PC-3 (cell line): ENCODE measurements at regions of chrX and their contacts with region 1.

Region 1: GRCh38 chrX:130916636-130917422 is 13.8 kb upstream of the ENOX2 start:
- DNase-seq: peak; percentile 42
- ATAC-seq: peak; percentile 64
- H3K4me3 ChIP-seq: no peak overlapping the region
- H3K27ac ChIP-seq: no peak overlapping the region
- H3K4me1 ChIP-seq: no peaks in the 10 kb centered on the region
- H3K27me3 ChIP-seq: no peaks in the 10 kb centered on the region
- CTCF ChIP-seq: peak; percentile 85

Region 2: DNA sequence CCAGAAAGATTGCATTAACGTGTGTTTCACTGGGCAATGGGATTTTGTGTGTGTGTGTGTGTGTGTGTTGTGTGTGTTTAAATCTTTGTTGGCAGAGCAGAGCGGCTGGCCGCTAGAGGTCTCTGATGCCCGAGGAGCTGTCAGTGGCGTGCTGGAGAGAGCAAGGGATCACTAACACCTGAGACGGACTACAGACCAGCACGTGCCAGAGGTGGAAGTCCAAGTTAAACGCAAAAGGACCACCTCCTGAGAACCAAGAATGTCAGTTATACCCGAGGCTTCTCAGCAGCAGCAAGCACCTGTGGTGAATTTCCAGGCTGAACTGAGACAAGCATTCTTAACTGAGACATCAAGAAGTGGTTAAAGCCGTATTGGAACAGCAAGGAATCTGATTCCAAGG is 586.1 kb before region 1 on chrX:
- CTCF ChIA-PET with region 1: no interaction called
- POLR2A ChIA-PET with region 1: no interaction called
- intact Hi-C with region 1: loop called (anchors 2 kb)
- DNase-seq: peak; percentile 57
- ATAC-seq: peak; percentile 93
- H3K4me3 ChIP-seq: peak overlapping the region; percentile 47; the same call in 1 of the 2 replicates
- H3K27ac ChIP-seq: no peak overlapping the region
- H3K4me1 ChIP-seq: peaks cover 4% of the 10 kb centered on the region; the same call in 1 of the 2 replicates
- H3K27me3 ChIP-seq: no peaks in the 10 kb centered on the region; the same call in 1 of the 2 replicates
- CTCF ChIP-seq: peak; percentile 84

Region 3: DNA sequence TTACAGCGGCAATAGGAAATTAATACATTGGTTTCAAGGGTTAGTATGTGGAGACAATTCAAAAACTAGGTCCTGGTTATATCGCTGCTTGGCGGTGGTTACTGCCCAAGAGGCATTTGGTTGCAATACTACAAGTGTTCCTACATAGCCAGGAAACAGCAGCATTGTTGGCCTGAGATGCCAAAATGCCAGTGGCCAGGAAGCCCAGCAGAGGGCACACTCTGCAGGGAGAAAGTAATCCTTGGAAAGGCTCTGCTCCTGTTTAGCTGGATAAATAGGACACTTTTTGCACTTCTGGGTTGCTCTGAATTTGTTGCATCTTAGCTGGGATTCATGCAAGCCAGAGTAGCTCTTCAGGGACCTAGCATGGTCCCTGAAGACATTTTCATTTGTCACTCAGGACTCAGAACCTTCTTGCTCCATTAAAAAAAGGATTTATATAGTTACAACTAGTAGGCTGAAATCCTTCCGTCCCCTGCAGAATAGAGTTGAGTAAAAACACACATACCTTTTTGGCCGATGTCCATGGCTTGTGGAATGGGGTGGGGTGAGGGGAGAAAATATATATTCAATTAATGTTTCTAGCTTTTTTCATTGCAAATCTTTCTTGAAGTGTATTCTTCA is 523.3 kb before region 1 on chrX:
- CTCF ChIA-PET with region 1: interaction called, 12 read pairs
- POLR2A ChIA-PET with region 1: no interaction called
- intact Hi-C with region 1: loop called (anchors 1 kb)
- DNase-seq: peak; percentile 74
- ATAC-seq: peak; percentile 84
- H3K4me3 ChIP-seq: no peak overlapping the region
- H3K27ac ChIP-seq: no peak overlapping the region
- H3K4me1 ChIP-seq: no peaks in the 10 kb centered on the region
- H3K27me3 ChIP-seq: no peaks in the 10 kb centered on the region
- CTCF ChIP-seq: peak; percentile 75

Region 4: DNA sequence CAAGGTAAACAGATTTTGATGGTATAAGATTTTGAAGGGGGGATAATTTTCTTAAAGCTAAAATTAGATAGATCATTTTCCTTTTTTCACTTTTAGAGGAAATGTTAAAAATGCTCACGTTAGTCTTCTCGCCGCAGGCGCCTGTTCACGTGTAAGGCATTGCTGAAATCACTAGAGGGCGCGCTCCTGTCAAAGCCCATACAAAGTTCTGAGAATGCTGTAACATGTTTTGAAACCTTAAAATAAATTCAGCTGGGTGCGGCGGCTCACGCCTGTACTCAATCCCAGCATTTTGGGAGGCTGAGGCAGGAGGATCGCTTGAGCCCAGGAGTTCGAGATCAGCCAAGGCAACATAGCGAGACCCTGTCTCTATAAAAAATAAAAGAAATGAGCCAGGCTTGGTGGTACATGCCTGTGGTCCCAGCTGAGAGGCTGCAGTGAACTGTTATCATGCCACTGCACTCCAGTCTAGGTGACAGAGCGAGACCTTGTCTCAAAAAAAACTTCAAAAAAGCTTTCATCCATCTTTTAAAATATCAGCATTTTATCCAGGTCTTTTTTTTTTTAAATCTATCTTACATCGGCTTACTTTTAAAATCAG is 377.0 kb before region 1 on chrX:
- CTCF ChIA-PET with region 1: interaction called, 3 read pairs
- POLR2A ChIA-PET with region 1: no interaction called
- intact Hi-C with region 1: loop called (anchors 1 kb)
- DNase-seq: peak; percentile 63
- ATAC-seq: peak; percentile 55
- H3K4me3 ChIP-seq: no peak overlapping the region
- H3K27ac ChIP-seq: no peak overlapping the region
- H3K4me1 ChIP-seq: no peaks in the 10 kb centered on the region
- H3K27me3 ChIP-seq: no peaks in the 10 kb centered on the region
- CTCF ChIP-seq: peak; percentile 78

Region 5: GRCh38 chrX:130575831-130576389 is 340.9 kb before region 1 on chrX:
- CTCF ChIA-PET with region 1: interaction called, 17 read pairs
- POLR2A ChIA-PET with region 1: no interaction called
- intact Hi-C with region 1: loop called (anchors 1 kb)
- DNase-seq: peak; percentile 56
- ATAC-seq: peak; percentile 66
- H3K4me3 ChIP-seq: no peak overlapping the region
- H3K27ac ChIP-seq: no peak overlapping the region
- H3K4me1 ChIP-seq: peaks cover 12% of the 10 kb centered on the region
- H3K27me3 ChIP-seq: no peaks in the 10 kb centered on the region
- CTCF ChIP-seq: peak; percentile 82

Region 6: DNA sequence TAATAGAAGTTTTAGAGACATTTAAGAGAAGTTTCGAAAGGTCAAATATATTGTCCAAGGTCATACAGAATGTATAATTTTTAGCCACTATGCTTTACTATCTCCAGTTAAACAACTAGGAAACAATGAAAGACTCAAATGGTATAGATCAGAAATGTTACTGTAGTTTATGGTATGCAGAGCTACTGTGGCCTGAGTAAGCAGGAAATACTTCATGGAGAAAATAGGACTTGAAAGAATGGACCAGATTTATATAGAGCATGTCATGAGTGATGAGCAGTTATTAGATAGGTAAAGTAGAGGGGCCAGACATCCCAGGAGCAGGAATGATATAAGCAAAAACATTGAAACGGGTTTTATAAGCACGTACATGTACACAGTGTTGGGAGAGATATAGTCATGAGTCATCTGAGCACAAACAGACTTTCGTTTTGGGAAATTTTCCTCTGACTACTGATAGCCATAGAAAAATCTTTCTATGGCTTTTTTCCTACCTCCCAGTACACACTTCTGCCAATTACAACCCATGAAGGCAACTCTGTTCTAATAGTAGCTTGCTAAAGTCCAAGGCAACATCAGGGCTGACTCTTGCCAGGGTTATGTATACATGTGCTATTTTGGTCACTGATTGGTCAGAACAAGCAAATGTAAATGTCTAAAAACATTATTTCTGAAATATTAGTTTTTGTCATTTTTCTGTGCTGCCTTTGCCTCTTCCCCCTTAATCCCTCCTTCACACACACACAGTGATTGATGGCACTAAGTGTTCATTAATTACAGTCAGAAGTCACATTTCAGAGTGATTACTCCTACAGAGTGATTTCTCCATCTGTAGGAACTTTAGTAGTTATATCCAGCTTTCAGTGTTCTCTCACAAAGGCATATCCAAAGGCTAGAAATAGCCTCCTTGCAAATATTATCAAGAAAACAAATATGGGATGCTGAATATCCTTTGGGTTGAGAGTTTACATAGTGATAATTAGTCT is 212.5 kb before region 1 on chrX:
- CTCF ChIA-PET with region 1: no interaction called
- POLR2A ChIA-PET with region 1: no interaction called
- intact Hi-C with region 1: no loop called
- DNase-seq: peak; percentile 66
- ATAC-seq: peak; percentile 94
- H3K4me3 ChIP-seq: peak overlapping the region; percentile 21; the same call in 1 of the 2 replicates
- H3K27ac ChIP-seq: peak overlapping the region; percentile 58
- H3K4me1 ChIP-seq: peaks cover 27% of the 10 kb centered on the region
- H3K27me3 ChIP-seq: no peaks in the 10 kb centered on the region
- CTCF ChIP-seq: no peak